ENCODE measurements at regions of chr16 and their contacts with region 1.

Region 1: GRCh38 chr16:23060458-23061320 is 88.6 kb downstream of the USP31 start:
- DNase-seq: peak; percentile 57 to 91 (median 78)
- H3K4me3 ChIP-seq: no peak overlapping the region
- H3K27ac ChIP-seq: no peak overlapping the region
- H3K4me1 ChIP-seq: peaks cover 0 to 5% of the 10 kb centered on the region in 2 donors
- H3K27me3 ChIP-seq: no peaks in the 10 kb centered on the region
- CTCF ChIP-seq: peak; percentile 58 to 79 (median 74)
- POLR2A ChIP-seq: no peak

Region 2: DNA sequence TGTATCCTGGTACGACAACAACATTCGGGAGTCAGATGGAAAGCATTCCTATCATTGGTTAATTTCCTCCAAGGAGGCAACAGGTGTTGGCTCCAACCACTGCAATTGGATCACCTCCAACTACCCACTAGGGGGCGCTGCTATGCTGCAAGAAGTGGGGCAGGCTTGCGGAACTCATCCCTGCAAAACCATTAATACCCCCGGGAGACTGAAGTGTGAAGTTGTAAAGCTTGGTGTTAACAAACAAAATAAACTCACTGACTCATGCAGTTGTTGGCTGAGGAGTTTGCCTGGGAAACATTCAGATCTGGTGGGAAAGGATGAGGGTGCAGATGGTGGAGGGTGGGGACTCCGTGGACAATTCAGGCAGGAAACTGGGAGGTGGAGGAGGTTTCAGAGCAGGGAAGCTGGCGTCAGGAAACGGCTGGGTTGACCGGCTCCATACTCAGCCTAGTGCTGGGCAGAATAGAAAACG is 161.8 kb before region 1 on chr16:
- intact Hi-C with region 1: loop called in 1 of 2 experiments (anchors 5 kb)
- DNase-seq: peak; percentile 43 to 87 (median 73)
- H3K4me3 ChIP-seq: no peak overlapping the region
- H3K27ac ChIP-seq: no peak overlapping the region
- H3K4me1 ChIP-seq: no peaks in the 10 kb centered on the region
- H3K27me3 ChIP-seq: peaks cover 19% of the 10 kb centered on the region
- CTCF ChIP-seq: peak; percentile 61 to 84 (median 80)
- POLR2A ChIP-seq: no peak

Region 3: DNA sequence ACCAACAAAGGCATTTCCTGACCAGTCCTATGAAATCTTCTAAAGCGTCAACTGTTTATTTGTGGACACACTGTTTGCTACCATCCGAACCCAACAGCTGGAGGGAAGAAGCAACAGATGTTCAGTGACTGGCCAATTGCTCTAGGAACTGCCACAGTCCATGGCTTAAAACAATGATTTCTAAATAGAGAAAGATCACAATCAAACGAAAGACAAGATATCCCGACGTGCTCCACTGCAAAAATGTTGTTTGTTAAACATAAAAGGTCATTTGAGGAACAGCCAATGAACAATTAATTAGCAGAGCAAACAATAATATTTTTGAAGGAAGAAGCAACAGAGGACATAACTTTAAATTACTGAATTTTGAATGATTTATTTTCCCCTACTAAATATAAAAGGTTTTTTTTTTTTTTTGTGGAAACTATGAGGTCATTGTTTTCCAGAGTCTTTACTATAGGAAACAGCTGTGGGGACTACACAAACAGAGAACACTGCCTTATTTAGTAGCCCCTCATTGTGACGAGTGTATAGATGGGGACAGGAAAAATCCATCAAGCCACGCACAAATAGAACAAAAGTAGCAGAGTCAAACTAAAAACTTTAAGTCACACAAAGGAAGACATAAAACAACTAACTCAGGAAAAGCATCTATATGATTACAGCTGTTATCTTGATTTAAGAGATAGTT is 71.4 kb after region 1 on chr16:
- intact Hi-C with region 1: loop called in 1 of 2 experiments (anchors 10 kb)
- DNase-seq: no peak
- H3K4me3 ChIP-seq: no peak overlapping the region
- H3K27ac ChIP-seq: peak overlapping the region in 1 of 5 donors; percentile 40
- H3K4me1 ChIP-seq: peaks cover 17 to 35% of the 10 kb centered on the region in 2 donors
- H3K27me3 ChIP-seq: no peaks in the 10 kb centered on the region
- CTCF ChIP-seq: no peak
- POLR2A ChIP-seq: no peak

Region 4: GRCh38 chr16:23334457-23334853 is 273.8 kb after region 1 on chr16:
- intact Hi-C with region 1: no loop called
- DNase-seq: no peak
- H3K4me3 ChIP-seq: no peak overlapping the region
- H3K27ac ChIP-seq: no peak overlapping the region
- H3K4me1 ChIP-seq: no peaks in the 10 kb centered on the region
- H3K27me3 ChIP-seq: peaks cover 4% of the 10 kb centered on the region
- CTCF ChIP-seq: no peak
- POLR2A ChIP-seq: no peak